ENCODE measurements at regions of chr6 and their contacts with region 1.

Region 1: DNA sequence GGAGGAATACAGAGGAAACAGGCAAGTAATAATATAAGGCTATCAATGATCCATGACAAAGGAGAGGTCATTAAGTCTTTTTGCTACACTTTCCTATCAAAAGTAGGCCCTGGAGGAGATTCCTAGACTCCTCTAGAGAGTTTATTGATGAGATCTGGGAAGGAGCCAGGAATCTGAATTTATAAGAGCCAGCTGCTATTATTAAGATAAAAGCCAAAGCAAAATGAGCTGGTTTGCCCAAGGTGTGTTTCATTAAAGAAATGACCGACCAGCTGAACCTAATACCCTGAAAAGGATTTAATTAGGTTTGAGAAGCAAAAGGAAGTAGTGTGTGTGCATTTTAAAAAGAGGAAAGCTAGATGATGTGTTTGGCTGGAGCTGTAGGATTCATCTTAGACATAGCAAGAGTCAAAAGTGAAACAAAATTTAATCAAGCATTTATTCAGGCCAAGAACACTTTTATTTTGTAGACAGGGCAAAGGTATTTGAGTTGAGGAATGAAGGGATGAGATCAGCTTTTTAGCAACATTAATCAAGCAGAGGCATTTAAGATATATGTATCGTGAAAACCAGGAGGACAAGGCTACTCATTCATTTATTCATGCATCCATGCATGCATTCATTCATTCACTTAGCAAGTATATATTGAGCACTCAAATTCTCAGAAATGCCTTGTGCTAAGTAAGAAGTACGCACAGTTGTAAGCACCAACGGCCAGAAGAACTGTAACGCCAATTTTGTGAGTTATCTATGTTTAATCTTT is 43.5 kb upstream of the SCAF8 start:
- DNase-seq: no peak
- ATAC-seq: no peak
- H3K4me3 Mint-ChIP-seq: no peak overlapping the region
- H3K27ac Mint-ChIP-seq: no peak overlapping the region
- H3K4me1 Mint-ChIP-seq: no peaks in the 10 kb centered on the region
- H3K27me3 Mint-ChIP-seq: no peaks in the 10 kb centered on the region

Region 2: GRCh38 chr6:154857529-154857928 is 167.9 kb after region 1 on chr6:
- CTCF ChIA-PET with region 1: no interaction called
- POLR2A ChIA-PET with region 1: no interaction called
- intact Hi-C with region 1: loop called in 1 of 2 experiments (anchors 5 kb)
- DNase-seq: no peak
- ATAC-seq: peak; percentile 49
- H3K4me3 Mint-ChIP-seq: no peak overlapping the region
- H3K27ac Mint-ChIP-seq: no peak overlapping the region
- H3K4me1 Mint-ChIP-seq: peaks cover 3% of the 10 kb centered on the region
- H3K27me3 Mint-ChIP-seq: no peaks in the 10 kb centered on the region